Activated B cell treated with CpG ODN at 0.5 μM for 24 hours (primary cell): ENCODE measurements at regions of chr6 and their contacts with region 1.

Region 1: DNA sequence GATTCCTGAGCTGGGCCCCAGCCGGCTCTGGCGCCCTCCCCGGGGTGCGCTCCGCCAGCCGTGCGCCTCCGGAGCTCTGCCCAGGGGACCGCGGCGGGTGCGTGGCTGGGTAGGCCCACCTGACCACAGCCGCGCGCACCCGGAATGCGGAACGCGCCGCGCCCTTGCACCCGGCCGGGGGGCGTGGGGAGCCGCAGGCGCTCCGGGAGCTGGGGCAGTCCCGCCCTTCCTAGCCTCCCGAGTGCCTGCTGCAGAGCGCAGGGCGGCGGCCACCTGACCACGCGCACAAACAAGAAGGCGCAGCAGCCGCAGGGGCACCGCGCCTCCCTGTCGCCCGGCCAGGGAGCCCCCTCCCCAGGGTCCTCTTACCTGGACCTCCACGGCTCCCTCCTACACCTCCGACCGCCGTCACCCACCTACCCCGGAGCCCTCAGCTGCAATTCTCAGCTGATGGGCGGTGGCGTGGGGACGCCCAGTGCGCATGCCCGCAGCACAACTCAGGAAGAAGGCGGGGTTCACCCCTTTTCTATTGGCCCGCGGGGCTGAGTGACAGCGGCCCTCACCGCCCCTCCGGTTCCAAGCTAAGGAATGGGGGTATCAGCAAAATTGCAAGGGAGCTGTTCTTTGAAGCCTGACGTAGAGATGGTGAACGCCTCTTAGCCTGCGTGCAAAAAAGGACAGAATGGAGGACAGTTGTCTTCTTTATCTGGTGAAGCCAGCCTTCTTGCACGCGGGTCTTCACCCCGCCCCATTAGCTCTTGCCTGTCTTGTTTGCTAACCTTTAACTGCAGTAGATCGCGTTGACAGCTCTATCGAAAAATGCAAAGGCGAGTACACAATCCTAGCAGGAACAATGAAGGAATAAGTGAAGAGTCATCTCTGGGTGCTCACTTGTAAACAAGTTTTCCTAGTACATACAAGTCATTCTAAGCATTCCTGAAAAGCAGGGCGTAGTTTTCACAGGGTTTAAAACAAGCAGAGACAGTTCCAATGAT is at the start of gene STX7:
- DNase-seq: peak; percentile 89
- ATAC-seq: peak; percentile 82
- H3K4me3 Mint-ChIP-seq: peak within 1 kb of the TSS; percentile 96
- H3K27ac Mint-ChIP-seq: peak within 1 kb of the TSS; percentile 97
- H3K4me1 Mint-ChIP-seq: peaks cover 68% of the 10 kb centered on the region
- H3K27me3 Mint-ChIP-seq: no peaks in the 10 kb centered on the region
- CTCF ChIP-seq: no peak
- total RNA-seq, gene STX7: 109 and 138 TPM in 2 replicates

Region 2: DNA sequence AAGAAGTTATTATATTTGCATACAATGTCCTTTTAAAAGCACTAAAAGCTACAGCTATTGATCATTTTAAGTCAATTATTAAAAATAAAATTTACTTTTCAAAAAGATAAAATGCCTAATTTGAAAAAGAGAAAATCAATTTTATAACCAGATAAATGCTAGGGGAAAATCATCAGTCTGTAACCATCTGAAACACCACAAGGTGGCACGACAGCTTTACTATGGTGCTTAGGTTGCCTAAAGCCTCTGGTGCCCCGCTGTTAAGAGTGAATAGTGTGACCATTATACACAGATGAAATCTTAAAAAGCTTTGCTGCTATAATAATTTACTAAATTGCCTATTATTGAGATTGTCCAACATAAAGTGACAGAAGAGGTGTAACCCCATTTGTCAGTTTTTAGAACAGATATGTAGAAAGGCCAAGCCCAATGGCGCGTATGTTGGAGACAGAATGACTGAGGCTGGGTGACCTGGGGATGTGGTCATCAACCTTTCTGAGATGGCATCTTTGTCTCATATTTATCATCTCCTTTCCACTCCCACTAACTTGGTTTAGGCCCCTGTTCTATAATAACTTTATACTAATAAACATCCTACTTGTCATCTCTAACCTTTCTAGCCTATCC is 212.5 kb before region 1 on chr6:
- CTCF ChIA-PET with region 1: interaction called, 10 read pairs
- POLR2A ChIA-PET with region 1: no interaction called
- intact Hi-C with region 1: no loop called
- DNase-seq: no peak
- ATAC-seq: peak; percentile 98
- H3K4me3 Mint-ChIP-seq: no peak overlapping the region
- H3K27ac Mint-ChIP-seq: no peak overlapping the region
- H3K4me1 Mint-ChIP-seq: no peaks in the 10 kb centered on the region
- H3K27me3 Mint-ChIP-seq: no peaks in the 10 kb centered on the region
- CTCF ChIP-seq: peak; percentile 67

Region 3: GRCh38 chr6:132490024-132490423 is 22.9 kb before region 1 on chr6:
- CTCF ChIA-PET with region 1: interaction called, 21 read pairs
- POLR2A ChIA-PET with region 1: interaction called, 79 read pairs
- intact Hi-C with region 1: loop called (anchors 1 kb)
- DNase-seq: no peak
- ATAC-seq: peak; percentile 37
- H3K4me3 Mint-ChIP-seq: no peak overlapping the region
- H3K27ac Mint-ChIP-seq: no peak overlapping the region
- H3K4me1 Mint-ChIP-seq: peaks cover 39% of the 10 kb centered on the region
- H3K27me3 Mint-ChIP-seq: no peaks in the 10 kb centered on the region
- CTCF ChIP-seq: no peak

Region 4: GRCh38 chr6:132798869-132799538 is 286.1 kb after region 1 on chr6:
- CTCF ChIA-PET with region 1: no interaction called
- POLR2A ChIA-PET with region 1: interaction called, 13 read pairs
- intact Hi-C with region 1: no loop called
- DNase-seq: peak; percentile 52
- ATAC-seq: peak; percentile 76
- H3K4me3 Mint-ChIP-seq: no peak overlapping the region
- H3K27ac Mint-ChIP-seq: no peak overlapping the region
- H3K4me1 Mint-ChIP-seq: peaks cover 14% of the 10 kb centered on the region
- H3K27me3 Mint-ChIP-seq: no peaks in the 10 kb centered on the region
- CTCF ChIP-seq: no peak

Region 5: GRCh38 chr6:134247231-134247833 is 1734.4 kb after region 1 on chr6:
- CTCF ChIA-PET with region 1: no interaction called
- POLR2A ChIA-PET with region 1: no interaction called
- intact Hi-C with region 1: loop called (anchors 10 kb)
- DNase-seq: peak; percentile 44
- ATAC-seq: peak; percentile 82
- H3K4me3 Mint-ChIP-seq: peak overlapping the region; percentile 47
- H3K27ac Mint-ChIP-seq: peak overlapping the region; percentile 97
- H3K4me1 Mint-ChIP-seq: peaks cover 59% of the 10 kb centered on the region
- H3K27me3 Mint-ChIP-seq: no peaks in the 10 kb centered on the region
- CTCF ChIP-seq: no peak